CD8-positive, alpha-beta T cell (primary cell): ENCODE measurements at regions of chr15 and their contacts with region 1.

Region 1: DNA sequence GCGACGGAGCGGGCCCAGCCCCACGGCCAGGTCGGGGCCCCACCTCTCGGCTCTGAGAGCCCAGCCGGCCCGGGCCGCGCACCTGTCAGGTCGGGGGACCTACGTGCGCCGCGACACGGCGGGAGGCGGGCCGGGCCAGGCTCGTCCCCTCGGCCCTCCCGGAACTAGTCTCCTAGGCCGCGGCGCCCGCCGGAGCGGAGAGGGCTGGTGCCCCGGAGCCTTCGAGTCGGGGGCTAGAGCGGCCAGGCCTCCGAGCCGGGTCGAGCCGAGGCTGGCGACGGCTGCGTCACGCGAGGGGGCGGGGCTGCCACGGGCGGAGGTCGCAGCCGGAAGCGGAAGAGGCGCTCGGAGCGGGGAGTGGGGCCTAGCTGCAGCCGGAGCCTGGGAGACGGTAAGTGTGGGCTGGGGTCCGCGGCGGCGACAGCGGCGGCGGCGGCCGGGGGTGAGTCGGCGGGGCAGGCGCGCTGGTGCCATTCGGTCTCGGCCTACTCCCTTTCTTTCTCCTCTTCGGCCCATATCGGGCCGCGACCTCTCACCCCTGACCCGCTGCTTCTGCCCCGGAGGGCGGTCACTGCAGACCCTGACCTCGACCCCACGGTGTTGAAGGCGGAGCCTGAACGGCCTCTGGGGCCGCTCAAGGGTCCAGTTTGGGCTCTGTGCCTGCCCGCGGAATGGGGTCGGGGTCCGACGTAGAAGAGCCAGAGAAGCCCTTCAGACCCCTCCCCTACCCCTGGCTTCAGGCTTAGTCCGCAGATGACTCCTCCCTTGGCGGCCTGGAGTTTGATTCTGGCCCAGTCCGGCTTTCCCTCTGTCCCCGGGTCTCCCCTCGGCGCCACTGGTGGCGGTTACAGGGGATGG is at the start of gene CLK3:
- DNase-seq: peak; percentile 89 to 99 (median 96)
- ATAC-seq: peak; percentile 67
- H3K4me3 ChIP-seq: peak within 1 kb of the TSS; percentile 88 to 95
- H3K4me3 Mint-ChIP-seq: peak within 1 kb of the TSS; percentile 91
- H3K27ac ChIP-seq: peak within 1 kb of the TSS; percentile 97 to 99
- H3K27ac Mint-ChIP-seq: peak within 1 kb of the TSS; percentile 97
- H3K4me1 ChIP-seq: peaks cover 25% of the 10 kb centered on the region
- H3K4me1 Mint-ChIP-seq: peaks cover 38% of the 10 kb centered on the region
- H3K27me3 ChIP-seq: no peaks in the 10 kb centered on the region
- H3K27me3 Mint-ChIP-seq: no peaks in the 10 kb centered on the region
- CTCF ChIP-seq: no peak
- total RNA-seq, gene CLK3: 246 to 262 TPM

Region 2: DNA sequence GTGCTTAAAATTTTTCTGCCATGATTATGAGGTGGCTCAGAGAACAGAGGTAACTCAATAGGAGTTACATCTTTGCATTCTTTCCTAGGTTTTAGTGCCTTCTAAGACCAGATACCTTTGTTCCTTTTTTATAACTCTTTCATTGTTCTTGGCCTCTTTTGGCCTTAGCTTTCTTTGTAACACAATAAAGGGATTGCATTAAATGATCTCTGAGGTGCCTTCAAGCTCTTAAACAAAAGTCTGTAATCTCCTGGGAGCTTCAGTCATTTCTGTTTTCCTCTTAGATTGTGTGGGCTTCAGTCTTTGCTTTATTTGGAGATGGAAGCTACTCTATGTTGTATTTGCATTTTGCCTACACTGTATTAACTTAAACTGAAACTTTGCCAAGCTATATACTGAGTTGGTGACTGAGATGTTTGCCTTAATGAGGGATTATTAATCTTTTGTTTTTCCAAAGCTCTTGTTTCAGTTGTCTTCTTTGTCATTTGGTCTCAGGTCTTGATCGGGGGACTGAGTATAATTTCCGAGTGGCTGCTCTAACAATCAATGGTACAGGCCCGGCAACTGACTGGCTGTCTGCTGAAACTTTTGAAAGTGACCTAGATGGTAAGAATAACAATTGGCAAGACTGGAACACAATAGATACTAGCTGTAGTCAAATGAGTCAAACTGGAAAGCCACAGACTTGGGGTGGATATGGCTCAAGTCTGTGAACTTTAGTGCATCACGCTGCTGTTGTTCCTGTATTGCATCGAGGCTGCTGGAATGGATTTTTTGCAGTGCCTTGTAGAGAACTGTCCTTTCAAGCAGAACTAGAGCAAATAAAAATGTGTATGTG is 1357.2 kb before region 1 on chr15:
- CTCF ChIA-PET with region 1: no interaction called
- POLR2A ChIA-PET with region 1: no interaction called
- intact Hi-C with region 1: no loop called
- DNase-seq: no peak
- ATAC-seq: no peak
- H3K4me3 ChIP-seq: no peak overlapping the region
- H3K4me3 Mint-ChIP-seq: no peak overlapping the region
- H3K27ac ChIP-seq: no peak overlapping the region
- H3K27ac Mint-ChIP-seq: no peak overlapping the region
- H3K4me1 ChIP-seq: no peaks in the 10 kb centered on the region
- H3K4me1 Mint-ChIP-seq: no peaks in the 10 kb centered on the region
- H3K27me3 ChIP-seq: no peaks in the 10 kb centered on the region
- H3K27me3 Mint-ChIP-seq: no peaks in the 10 kb centered on the region
- CTCF ChIP-seq: no peak

Region 3: DNA sequence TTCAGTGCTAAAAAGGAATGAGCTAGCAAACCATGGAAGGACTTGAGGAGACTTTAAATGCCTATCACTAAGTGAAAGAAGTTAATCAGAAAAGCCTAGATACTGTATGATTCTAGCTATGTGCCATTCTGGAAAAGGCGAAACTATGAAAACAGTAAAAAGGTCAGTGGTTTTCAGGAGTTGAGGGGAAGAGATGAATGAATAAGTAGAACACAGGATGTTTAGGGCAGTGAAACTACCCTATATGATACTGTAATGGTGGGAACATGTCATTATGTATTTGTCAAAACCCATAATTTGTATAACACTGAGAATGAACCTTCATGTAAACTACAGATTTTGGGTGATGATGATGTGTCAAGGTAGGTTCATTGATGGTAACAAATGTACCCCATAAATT is 941.1 kb before region 1 on chr15:
- CTCF ChIA-PET with region 1: no interaction called
- POLR2A ChIA-PET with region 1: no interaction called
- intact Hi-C with region 1: no loop called
- DNase-seq: no peak
- ATAC-seq: no peak
- H3K4me3 ChIP-seq: no peak overlapping the region
- H3K4me3 Mint-ChIP-seq: no peak overlapping the region
- H3K27ac ChIP-seq: no peak overlapping the region
- H3K27ac Mint-ChIP-seq: no peak overlapping the region
- H3K4me1 ChIP-seq: no peaks in the 10 kb centered on the region
- H3K4me1 Mint-ChIP-seq: no peaks in the 10 kb centered on the region
- H3K27me3 ChIP-seq: peaks cover 0 to 10% of the 10 kb centered on the region in 2 experiments
- H3K27me3 Mint-ChIP-seq: peaks cover 39% of the 10 kb centered on the region
- CTCF ChIP-seq: no peak

Region 4: GRCh38 chr15:74213858-74214284 is 401.9 kb before region 1 on chr15:
- CTCF ChIA-PET with region 1: no interaction called
- POLR2A ChIA-PET with region 1: no interaction called
- intact Hi-C with region 1: no loop called
- DNase-seq: no peak
- ATAC-seq: no peak
- H3K4me3 ChIP-seq: no peak overlapping the region
- H3K4me3 Mint-ChIP-seq: no peak overlapping the region
- H3K27ac ChIP-seq: no peak overlapping the region
- H3K27ac Mint-ChIP-seq: no peak overlapping the region
- H3K4me1 ChIP-seq: no peaks in the 10 kb centered on the region
- H3K4me1 Mint-ChIP-seq: no peaks in the 10 kb centered on the region
- H3K27me3 ChIP-seq: no peaks in the 10 kb centered on the region
- H3K27me3 Mint-ChIP-seq: peaks cover 8% of the 10 kb centered on the region
- CTCF ChIP-seq: no peak

Region 5: DNA sequence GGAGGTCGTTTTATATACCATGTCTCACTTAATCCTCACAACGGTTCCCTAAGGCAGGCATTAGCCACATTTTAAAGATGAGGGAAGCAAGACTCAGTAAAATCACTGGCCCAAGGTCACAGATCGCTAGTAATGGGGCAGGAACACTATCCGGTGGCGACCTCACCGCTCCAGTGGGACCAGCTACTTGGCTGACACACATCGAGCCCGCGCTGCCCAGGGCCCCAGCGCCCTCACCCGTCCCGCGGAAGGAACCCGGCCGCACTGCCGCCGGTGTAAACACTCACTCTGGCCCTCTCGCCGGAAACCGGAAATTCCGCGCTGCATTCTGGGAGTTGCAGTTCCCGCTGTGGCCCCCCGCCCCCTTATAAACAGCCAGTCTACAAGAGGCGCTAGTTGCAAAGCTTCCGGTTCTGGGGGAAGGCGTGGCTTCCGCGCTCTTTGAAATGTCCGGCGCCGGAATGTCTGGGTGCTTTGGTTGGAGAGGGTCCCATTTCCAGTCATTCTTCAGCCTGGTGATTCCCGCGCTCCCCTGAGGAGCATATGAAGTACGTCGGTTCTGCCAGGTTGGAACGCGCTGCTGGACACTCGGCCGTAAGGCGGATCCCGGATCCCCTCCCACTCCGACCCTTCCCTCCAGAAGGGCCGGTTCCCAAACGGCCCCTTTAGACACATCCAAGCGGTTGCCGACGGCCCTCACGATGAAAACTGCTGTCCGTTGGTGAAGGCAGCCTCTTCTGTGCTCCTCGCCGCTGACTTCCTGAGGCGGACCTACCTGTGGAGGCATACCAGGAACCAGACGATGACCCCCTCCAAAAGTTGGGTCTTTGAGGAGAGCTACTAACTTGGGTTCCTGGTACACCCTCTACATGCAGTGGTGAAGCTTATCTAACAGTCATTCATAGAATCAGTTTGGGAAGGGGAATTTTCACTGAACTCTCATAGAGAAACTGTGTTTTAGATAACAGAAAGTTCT is 154.6 kb before region 1 on chr15 and contains the start of gene UBL7:
- CTCF ChIA-PET with region 1: no interaction called
- POLR2A ChIA-PET with region 1: interaction called, 3 read pairs
- intact Hi-C with region 1: loop called (anchors 1 kb)
- DNase-seq: peak; percentile 93 to 99 (median 96)
- ATAC-seq: peak; percentile 98
- H3K4me3 ChIP-seq: peak within 1 kb of the TSS; percentile 74 to 85
- H3K4me3 Mint-ChIP-seq: peak within 1 kb of the TSS; percentile 93
- H3K27ac ChIP-seq: peak within 1 kb of the TSS; percentile 53 to 83
- H3K27ac Mint-ChIP-seq: peak within 1 kb of the TSS; percentile 94
- H3K4me1 ChIP-seq: peaks cover 21% of the 10 kb centered on the region
- H3K4me1 Mint-ChIP-seq: peaks cover 50% of the 10 kb centered on the region
- H3K27me3 ChIP-seq: no peaks in the 10 kb centered on the region
- H3K27me3 Mint-ChIP-seq: no peaks in the 10 kb centered on the region
- CTCF ChIP-seq: no peak
- total RNA-seq, gene UBL7: 21.7 to 23.1 TPM

Region 6: DNA sequence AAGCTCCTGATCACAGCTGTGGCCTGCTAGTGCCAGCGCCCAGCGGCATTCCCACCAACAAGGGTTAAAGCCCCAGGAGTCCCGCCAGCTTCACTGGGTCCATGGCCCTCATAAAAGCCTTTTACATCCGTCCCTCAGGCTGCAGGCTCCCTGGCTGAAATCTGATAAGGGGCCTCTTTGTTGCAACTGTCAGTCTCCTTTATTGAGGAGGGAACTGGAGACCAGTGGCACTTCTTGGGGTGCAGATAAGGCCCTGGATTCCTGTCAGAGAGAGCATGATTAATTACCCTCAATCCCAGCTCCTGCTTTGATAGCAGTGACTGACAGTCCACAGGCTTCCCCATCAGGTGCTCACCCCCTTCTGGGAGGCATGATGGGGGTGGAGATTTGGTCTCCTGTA is 31.0 kb before region 1 on chr15:
- CTCF ChIA-PET with region 1: no interaction called
- POLR2A ChIA-PET with region 1: no interaction called
- intact Hi-C with region 1: no loop called
- DNase-seq: no peak
- ATAC-seq: no peak
- H3K4me3 ChIP-seq: no peak overlapping the region
- H3K4me3 Mint-ChIP-seq: no peak overlapping the region
- H3K27ac ChIP-seq: no peak overlapping the region
- H3K27ac Mint-ChIP-seq: no peak overlapping the region
- H3K4me1 ChIP-seq: no peaks in the 10 kb centered on the region
- H3K4me1 Mint-ChIP-seq: no peaks in the 10 kb centered on the region
- H3K27me3 ChIP-seq: no peaks in the 10 kb centered on the region
- H3K27me3 Mint-ChIP-seq: no peaks in the 10 kb centered on the region
- CTCF ChIP-seq: no peak

Region 7: DNA sequence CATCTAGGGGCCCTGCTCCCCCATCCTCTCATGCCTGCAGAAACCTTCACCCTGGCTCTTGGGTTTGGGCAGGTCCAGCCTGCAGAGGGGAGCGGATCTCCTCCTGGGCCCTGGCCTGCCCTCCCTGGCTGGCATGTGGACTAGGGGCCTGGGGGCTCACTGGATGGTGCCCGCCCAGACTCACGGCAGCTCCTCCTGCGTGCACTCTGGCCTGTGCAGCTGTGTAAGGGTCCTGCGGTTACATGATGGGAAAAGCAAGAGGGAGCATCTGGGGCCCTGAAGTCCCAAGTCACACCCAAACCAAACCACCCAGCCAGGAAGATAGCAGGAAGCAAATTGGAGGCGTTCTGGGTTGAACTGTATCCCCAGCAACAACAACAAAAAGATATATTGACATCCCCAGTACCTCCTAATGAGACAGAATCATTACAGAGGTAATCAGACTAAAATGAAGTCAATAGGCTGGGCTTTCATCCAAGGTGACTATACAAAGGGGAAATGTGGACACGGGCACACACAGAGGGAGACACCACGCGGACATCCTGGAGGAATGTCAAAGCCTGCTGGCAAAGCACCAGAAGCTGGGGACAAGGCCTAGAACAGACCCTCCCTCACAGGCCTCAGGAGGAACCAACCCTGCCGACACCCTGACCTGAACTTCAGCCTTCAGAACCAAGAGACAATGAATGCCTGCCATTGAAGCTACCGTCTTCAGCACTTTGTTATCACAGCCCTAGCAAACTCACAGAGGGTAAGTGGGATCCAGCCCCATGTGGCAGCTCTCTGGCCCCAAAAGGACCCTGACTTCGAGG is 10.5 kb before region 1 on chr15:
- CTCF ChIA-PET with region 1: interaction called, 3 read pairs
- POLR2A ChIA-PET with region 1: interaction called, 11 read pairs
- intact Hi-C with region 1: no loop called
- DNase-seq: no peak
- ATAC-seq: no peak
- H3K4me3 ChIP-seq: no peak overlapping the region
- H3K4me3 Mint-ChIP-seq: no peak overlapping the region
- H3K27ac ChIP-seq: no peak overlapping the region
- H3K27ac Mint-ChIP-seq: no peak overlapping the region
- H3K4me1 ChIP-seq: no peaks in the 10 kb centered on the region
- H3K4me1 Mint-ChIP-seq: peaks cover 2% of the 10 kb centered on the region
- H3K27me3 ChIP-seq: no peaks in the 10 kb centered on the region
- H3K27me3 Mint-ChIP-seq: no peaks in the 10 kb centered on the region
- CTCF ChIP-seq: no peak

Region 8: GRCh38 chr15:74695597-74696397 is 80.1 kb after region 1 on chr15 and contains the start of gene EDC3:
- CTCF ChIA-PET with region 1: no interaction called
- POLR2A ChIA-PET with region 1: no interaction called
- intact Hi-C with region 1: loop called (anchors 2 kb)
- DNase-seq: peak; percentile 72 to 94 (median 89)
- ATAC-seq: peak; percentile 88
- H3K4me3 ChIP-seq: peak within 1 kb of the TSS; percentile 79 to 93
- H3K4me3 Mint-ChIP-seq: peak within 1 kb of the TSS; percentile 100
- H3K27ac ChIP-seq: peak within 1 kb of the TSS; percentile 80 to 83
- H3K27ac Mint-ChIP-seq: peak within 1 kb of the TSS; percentile 99
- H3K4me1 ChIP-seq: peaks cover 14% of the 10 kb centered on the region
- H3K4me1 Mint-ChIP-seq: peaks cover 47% of the 10 kb centered on the region
- H3K27me3 ChIP-seq: peaks cover 0 to 1% of the 10 kb centered on the region in 2 experiments
- H3K27me3 Mint-ChIP-seq: no peaks in the 10 kb centered on the region
- CTCF ChIP-seq: no peak
- total RNA-seq, gene EDC3: 9.8 to 11.8 TPM

Region 9: DNA sequence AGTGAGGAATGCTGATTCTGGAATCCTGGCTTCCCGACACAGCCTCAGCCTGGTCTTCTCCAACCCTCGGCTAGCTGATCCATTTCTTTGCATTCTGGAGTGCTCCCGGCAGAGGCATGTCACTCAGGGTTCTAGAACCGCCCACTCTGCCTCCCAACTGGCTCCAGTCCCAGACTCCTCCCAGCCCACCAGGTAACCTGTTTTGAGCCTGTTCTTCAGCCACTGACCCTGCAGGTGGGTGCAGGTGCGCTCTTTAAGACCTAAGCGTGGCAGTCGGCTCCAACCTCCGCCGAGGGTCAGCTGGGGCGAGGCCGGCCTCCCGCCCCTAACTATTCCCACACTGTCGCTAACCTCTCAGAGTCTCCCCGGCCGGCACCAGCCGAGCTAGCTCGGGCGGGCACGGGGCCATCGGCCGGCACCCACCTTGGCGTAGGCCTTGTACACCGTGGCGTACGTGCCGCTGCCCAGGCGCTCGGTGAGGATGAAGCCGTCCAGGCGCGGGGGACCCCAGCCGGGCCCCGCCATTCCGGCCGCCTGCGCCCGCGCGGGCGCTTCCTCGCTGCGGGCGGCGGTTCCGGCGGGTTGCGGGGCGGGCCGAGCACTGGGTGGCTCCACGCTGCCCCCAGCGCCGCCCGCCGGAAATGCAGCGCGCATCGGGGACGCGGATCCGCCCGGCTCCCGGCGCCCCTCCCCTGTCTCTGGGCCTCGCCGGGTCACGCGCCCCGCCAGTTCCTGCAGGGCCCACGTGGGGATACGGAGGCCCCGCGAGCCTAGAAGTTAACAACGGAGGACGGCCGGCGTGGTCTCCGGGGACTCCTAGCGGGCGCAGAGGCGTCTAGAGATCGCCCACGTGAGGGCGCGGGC is 227.1 kb after region 1 on chr15 and contains the start of gene ULK3:
- CTCF ChIA-PET with region 1: no interaction called
- POLR2A ChIA-PET with region 1: no interaction called
- intact Hi-C with region 1: loop called in 1 of 2 experiments (anchors 1 kb)
- DNase-seq: peak; percentile 88 to 96 (median 92)
- ATAC-seq: peak; percentile 92
- H3K4me3 ChIP-seq: peak within 1 kb of the TSS; percentile 90 to 97
- H3K4me3 Mint-ChIP-seq: peak within 1 kb of the TSS; percentile 91
- H3K27ac ChIP-seq: peak within 1 kb of the TSS; percentile 72 to 78
- H3K27ac Mint-ChIP-seq: peak within 1 kb of the TSS; percentile 93
- H3K4me1 ChIP-seq: peaks cover 43% of the 10 kb centered on the region
- H3K4me1 Mint-ChIP-seq: peaks cover 48% of the 10 kb centered on the region
- H3K27me3 ChIP-seq: no peaks in the 10 kb centered on the region
- H3K27me3 Mint-ChIP-seq: no peaks in the 10 kb centered on the region
- CTCF ChIP-seq: peak; percentile 71
- total RNA-seq, gene ULK3: 34.3 to 35.1 TPM

Region 10: GRCh38 chr15:75023181-75023871 is 407.6 kb after region 1 on chr15 and contains the start of gene PPCDC:
- CTCF ChIA-PET with region 1: no interaction called
- POLR2A ChIA-PET with region 1: no interaction called
- intact Hi-C with region 1: loop called in 1 of 2 experiments (anchors 10 kb)
- DNase-seq: peak; percentile 81 to 96 (median 93)
- ATAC-seq: peak; percentile 100
- H3K4me3 ChIP-seq: peak within 1 kb of the TSS; percentile 82 to 93
- H3K4me3 Mint-ChIP-seq: peak within 1 kb of the TSS; percentile 92
- H3K27ac ChIP-seq: peak within 1 kb of the TSS; percentile 76 to 77
- H3K27ac Mint-ChIP-seq: peak within 1 kb of the TSS; percentile 92
- H3K4me1 ChIP-seq: peaks cover 8% of the 10 kb centered on the region
- H3K4me1 Mint-ChIP-seq: peaks cover 14% of the 10 kb centered on the region
- H3K27me3 ChIP-seq: no peaks in the 10 kb centered on the region
- H3K27me3 Mint-ChIP-seq: no peaks in the 10 kb centered on the region
- CTCF ChIP-seq: no peak
- total RNA-seq, gene PPCDC: 6.0 to 6.5 TPM